GM12878 (cell line): ENCODE measurements at regions of chr6 and their contacts with region 1.

Region 1: DNA sequence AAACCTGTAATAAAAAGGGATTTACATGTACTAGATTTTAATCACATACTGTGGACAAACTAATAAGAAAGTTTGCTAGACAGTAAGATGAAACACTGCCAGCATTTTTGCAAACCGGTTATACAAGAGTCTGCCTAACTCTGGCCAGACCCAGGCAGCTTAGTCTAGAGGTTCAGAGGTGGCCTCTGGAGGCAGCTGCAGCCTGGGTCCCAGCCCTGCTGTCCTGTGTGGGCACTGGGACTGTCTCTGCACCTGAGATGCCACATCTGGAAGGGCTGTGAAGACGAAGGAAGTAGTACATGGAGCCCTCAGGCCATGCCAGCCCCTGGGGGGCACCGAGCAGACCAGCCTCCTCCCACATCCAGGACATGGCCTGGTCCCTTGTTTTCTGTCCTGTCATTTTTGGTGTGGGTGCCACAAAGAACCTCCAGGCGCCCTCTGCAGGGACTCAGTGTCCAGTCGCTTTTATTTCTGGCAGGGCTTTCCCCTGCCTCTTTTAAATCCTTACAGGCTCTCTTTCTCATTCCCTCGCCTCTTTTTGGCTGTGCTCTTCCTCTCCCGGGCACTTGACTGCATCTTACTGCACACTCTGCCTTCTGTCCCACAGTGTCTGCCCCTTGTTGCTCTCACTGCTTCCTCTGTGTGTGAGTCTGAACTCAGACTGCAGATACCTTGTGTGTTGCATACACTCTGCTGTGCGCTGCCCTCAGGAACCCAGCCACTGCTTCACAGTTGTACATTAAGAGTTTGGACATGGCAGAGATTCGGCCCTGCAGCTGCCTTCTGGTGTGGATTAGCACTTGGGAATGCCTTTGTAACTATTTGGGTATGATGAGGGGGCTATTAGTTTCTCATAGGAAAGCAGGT is 216.7 kb downstream of the ZDHHC14 start:
- DNase-seq: no peak
- ATAC-seq: peak; percentile 91
- H3K4me3 ChIP-seq: no peak overlapping the region
- H3K27ac ChIP-seq: no peak overlapping the region
- H3K4me1 ChIP-seq: no peaks in the 10 kb centered on the region; the same call in 1 of the 2 replicates
- H3K27me3 ChIP-seq: no peaks in the 10 kb centered on the region
- CTCF ChIP-seq: peak; percentile 51 to 72 (median 56); a peak in 5 of 6 replicates
- EP300 ChIP-seq: no peak
- POLR2A ChIP-seq: no peak
- RAD21 ChIP-seq: peak; percentile 75

Region 2: GRCh38 chr6:157123234-157123633 is 474.4 kb before region 1 on chr6:
- CTCF ChIA-PET with region 1: no interaction called
- POLR2A ChIA-PET with region 1: no interaction called
- RAD21 ChIA-PET with region 1: no interaction called
- SMC1A ChIA-PET with region 1: no interaction called
- in situ Hi-C with region 1: no loop called
- intact Hi-C with region 1: no loop called
- DNase-seq: no peak
- ATAC-seq: no peak
- H3K4me3 ChIP-seq: no peak overlapping the region
- H3K27ac ChIP-seq: no peak overlapping the region
- H3K4me1 ChIP-seq: no peaks in the 10 kb centered on the region
- H3K27me3 ChIP-seq: no peaks in the 10 kb centered on the region
- CTCF ChIP-seq: no peak
- EP300 ChIP-seq: no peak
- POLR2A ChIP-seq: no peak
- RAD21 ChIP-seq: no peak

Region 3: GRCh38 chr6:157298216-157298724 is 299.4 kb before region 1 on chr6:
- CTCF ChIA-PET with region 1: no interaction called
- POLR2A ChIA-PET with region 1: no interaction called
- RAD21 ChIA-PET with region 1: no interaction called
- SMC1A ChIA-PET with region 1: no interaction called
- in situ Hi-C with region 1: no loop called
- intact Hi-C with region 1: no loop called
- DNase-seq: no peak
- ATAC-seq: no peak
- H3K4me3 ChIP-seq: no peak overlapping the region
- H3K27ac ChIP-seq: no peak overlapping the region
- H3K4me1 ChIP-seq: no peaks in the 10 kb centered on the region
- H3K27me3 ChIP-seq: no peaks in the 10 kb centered on the region
- CTCF ChIP-seq: no peak
- EP300 ChIP-seq: no peak
- POLR2A ChIP-seq: no peak
- RAD21 ChIP-seq: no peak

Region 4: DNA sequence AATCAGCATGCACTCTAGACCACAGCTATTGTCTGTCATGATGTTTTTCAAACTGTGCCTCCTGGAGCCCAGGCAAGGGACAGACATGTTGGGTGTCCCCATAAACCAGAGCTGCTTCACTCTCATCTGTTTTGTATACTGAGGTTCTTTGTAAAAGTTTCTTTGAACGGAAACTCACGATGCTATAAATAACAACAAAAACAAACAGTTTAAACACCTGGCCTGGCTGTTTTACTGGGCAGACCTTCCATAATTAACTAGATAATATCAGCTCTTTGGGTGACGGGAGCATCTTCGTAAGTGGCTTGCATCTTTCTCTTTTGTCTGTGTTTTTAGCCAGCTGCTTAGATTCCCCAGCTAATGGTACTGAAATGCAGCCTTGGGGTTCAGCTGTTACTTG is 26.4 kb before region 1 on chr6:
- CTCF ChIA-PET with region 1: interaction called, 26 read pairs
- POLR2A ChIA-PET with region 1: interaction called, 4 read pairs
- RAD21 ChIA-PET with region 1: interaction called, 35 read pairs
- SMC1A ChIA-PET with region 1: interaction called, 41 read pairs
- in situ Hi-C with region 1: no loop called
- intact Hi-C with region 1: no loop called
- DNase-seq: peak; percentile 68
- ATAC-seq: peak; percentile 69
- H3K4me3 ChIP-seq: no peak overlapping the region
- H3K27ac ChIP-seq: peak overlapping the region; percentile 60
- H3K4me1 ChIP-seq: peaks cover 22% of the 10 kb centered on the region
- H3K27me3 ChIP-seq: no peaks in the 10 kb centered on the region
- CTCF ChIP-seq: 0 out of 6 replicates have a peak, but pooled peaks of 1 of the 3 experiments have one; percentile 9
- EP300 ChIP-seq: peak; percentile 16 to 84; a peak in 1 of 4 replicates
- POLR2A ChIP-seq: no peak
- RAD21 ChIP-seq: no peak

Region 5: GRCh38 chr6:157614026-157614568 is 16.4 kb after region 1 on chr6:
- CTCF ChIA-PET with region 1: interaction called, 13 read pairs
- POLR2A ChIA-PET with region 1: no interaction called
- RAD21 ChIA-PET with region 1: interaction called, 5 read pairs
- SMC1A ChIA-PET with region 1: interaction called, 5 read pairs
- in situ Hi-C with region 1: no loop called
- intact Hi-C with region 1: no loop called
- DNase-seq: no peak
- ATAC-seq: peak; percentile 79
- H3K4me3 ChIP-seq: no peak overlapping the region
- H3K27ac ChIP-seq: no peak overlapping the region
- H3K4me1 ChIP-seq: no peaks in the 10 kb centered on the region
- H3K27me3 ChIP-seq: no peaks in the 10 kb centered on the region
- CTCF ChIP-seq: peak in 2 of 3 experiments; percentile 13 to 44; a peak in 2 of 6 replicates
- EP300 ChIP-seq: no peak
- POLR2A ChIP-seq: no peak
- RAD21 ChIP-seq: peak; percentile 41; the same call in 1 of the 2 replicates